HCT116 (cell line): ENCODE measurements at regions of chr11 and their contacts with region 1.

Region 1: DNA sequence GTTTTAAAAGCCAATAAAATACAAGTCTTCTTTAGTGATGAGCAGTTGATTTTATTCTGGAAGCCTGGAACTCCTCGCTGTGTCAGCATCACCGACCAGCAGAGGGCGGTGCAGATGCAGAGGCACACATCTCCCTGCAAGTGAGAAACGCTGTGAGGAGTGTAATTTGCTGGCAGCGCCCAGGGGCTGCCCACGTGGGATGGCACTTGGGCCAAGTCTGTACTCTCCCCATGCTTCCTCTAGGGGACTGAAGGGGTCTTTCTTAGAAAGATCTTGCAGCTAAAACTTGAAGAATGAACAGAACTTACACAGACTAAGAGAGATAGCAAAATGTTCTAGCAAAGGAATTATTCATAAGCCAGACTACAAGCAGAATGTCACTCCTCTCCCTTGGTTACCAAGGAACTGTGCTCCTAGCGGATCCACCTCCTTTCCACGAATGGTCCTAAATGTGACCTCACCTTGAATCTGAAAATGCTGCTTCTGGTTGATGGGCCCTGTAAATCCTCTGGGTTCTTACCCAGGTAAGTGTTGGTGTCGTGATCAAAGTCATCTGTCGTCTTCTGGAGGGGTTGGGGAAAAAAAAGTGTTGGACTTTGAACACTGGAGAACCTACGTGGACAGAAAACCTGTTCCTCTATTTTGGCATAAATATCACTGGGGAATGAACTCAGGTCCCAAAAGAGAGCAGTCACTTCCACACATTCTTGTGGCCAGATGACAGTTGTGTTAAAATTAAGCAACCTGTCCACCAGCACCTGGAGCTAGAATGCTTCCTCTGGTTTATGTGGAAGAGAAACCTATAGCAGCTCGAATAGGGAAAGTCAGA is 31.8 kb downstream of the CNTF start:
- DNase-seq: peak; percentile 68
- ATAC-seq: peak; percentile 97
- H3K4me3 ChIP-seq: no peak overlapping the region
- H3K27ac ChIP-seq: no peak overlapping the region
- H3K4me1 ChIP-seq: peaks cover 11 to 16% of the 10 kb centered on the region in 2 experiments
- H3K27me3 ChIP-seq: no peaks in the 10 kb centered on the region
- CTCF ChIP-seq: peak; percentile 90 to 96 (median 92)
- POLR2A ChIP-seq: no peak
- RAD21 ChIP-seq: peak; percentile 85

Region 2: GRCh38 chr11:58675334-58676155 is 21.3 kb after region 1 on chr11:
- CTCF ChIA-PET with region 1: interaction called, 3 read pairs
- POLR2A ChIA-PET with region 1: no interaction called
- RAD21 ChIA-PET with region 1: no interaction called
- intact Hi-C with region 1: loop called (anchors 1 kb)
- DNase-seq: peak; percentile 51
- ATAC-seq: peak; percentile 99
- H3K4me3 ChIP-seq: no peak overlapping the region
- H3K27ac ChIP-seq: no peak overlapping the region
- H3K4me1 ChIP-seq: no peaks in the 10 kb centered on the region; a peak in 1 of 4 replicates
- H3K27me3 ChIP-seq: no peaks in the 10 kb centered on the region
- CTCF ChIP-seq: peak; percentile 84 to 98 (median 97)
- POLR2A ChIP-seq: no peak
- RAD21 ChIP-seq: peak; percentile 76

Region 3: GRCh38 chr11:58788355-58789023 is 134.2 kb after region 1 on chr11:
- CTCF ChIA-PET with region 1: interaction called, 8 read pairs
- POLR2A ChIA-PET with region 1: no interaction called
- RAD21 ChIA-PET with region 1: no interaction called
- intact Hi-C with region 1: loop called (anchors 1 kb)
- DNase-seq: peak; percentile 34
- ATAC-seq: peak; percentile 98
- H3K4me3 ChIP-seq: no peak overlapping the region
- H3K27ac ChIP-seq: no peak overlapping the region
- H3K4me1 ChIP-seq: peaks cover 0 to 10% of the 10 kb centered on the region in 2 experiments; a peak in 1 of 4 replicates
- H3K27me3 ChIP-seq: no peaks in the 10 kb centered on the region
- CTCF ChIP-seq: peak; percentile 75 to 95 (median 88); a peak in 5 of 6 replicates
- POLR2A ChIP-seq: no peak
- RAD21 ChIP-seq: peak; percentile 91

Region 4: DNA sequence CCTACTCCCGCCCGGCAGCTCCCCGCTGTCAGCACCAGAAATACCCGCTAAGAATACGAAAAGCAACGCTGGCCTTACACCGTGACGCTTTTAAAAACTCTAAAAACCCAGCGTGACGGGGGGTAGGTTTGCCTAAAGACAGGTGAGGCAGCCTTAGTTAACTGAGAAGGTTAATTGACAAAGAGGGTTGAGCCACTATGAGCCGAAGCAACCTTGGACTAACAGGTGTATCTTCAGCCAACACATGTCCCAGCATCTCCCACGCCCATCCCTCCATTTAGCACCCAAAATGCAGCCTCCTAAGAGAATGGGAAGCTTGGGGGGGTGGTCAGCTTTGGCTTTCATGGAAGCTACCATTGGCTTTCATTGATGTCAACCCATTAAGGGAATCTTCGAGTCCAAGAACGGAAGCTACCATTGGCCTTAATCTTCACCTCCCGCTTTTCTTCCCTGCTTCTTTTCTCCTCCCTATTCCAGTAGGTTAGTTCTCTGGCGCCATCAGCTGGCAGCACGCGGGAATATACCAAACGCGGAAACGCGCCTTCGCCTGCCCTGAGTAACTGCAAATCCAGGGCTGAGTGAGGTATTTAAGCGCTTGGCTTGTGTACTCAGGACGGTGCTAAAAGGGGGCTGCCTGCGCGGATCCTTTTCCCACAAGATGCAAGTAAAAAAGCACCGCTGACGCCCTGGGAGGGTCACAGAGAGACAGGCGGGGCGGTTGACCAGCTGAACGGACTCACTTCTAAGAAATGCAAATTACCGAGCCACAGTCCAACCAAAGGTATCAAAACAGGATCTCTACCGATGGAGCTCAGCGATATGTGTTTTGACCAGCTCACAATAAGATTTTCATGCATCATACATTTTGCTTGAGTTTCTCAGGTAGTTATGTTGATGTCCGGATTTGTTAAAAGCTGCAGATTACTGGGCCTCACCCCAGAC is 246.5 kb after region 1 on chr11:
- CTCF ChIA-PET with region 1: interaction called, 4 read pairs
- POLR2A ChIA-PET with region 1: interaction called, 3 read pairs
- RAD21 ChIA-PET with region 1: interaction called in 1 of 2 experiments, 3 read pairs
- intact Hi-C with region 1: loop called (anchors 2 kb)
- DNase-seq: peak; percentile 80
- ATAC-seq: peak; percentile 99
- H3K4me3 ChIP-seq: no peak overlapping the region
- H3K27ac ChIP-seq: no peak overlapping the region
- H3K4me1 ChIP-seq: no peaks in the 10 kb centered on the region
- H3K27me3 ChIP-seq: no peaks in the 10 kb centered on the region
- CTCF ChIP-seq: peak; percentile 71 to 79 (median 78); a peak in 5 of 6 replicates
- POLR2A ChIP-seq: no peak
- RAD21 ChIP-seq: peak; percentile 83

Region 5: GRCh38 chr11:59053387-59053786 is 399.1 kb after region 1 on chr11:
- CTCF ChIA-PET with region 1: interaction called, 6 read pairs
- POLR2A ChIA-PET with region 1: no interaction called
- RAD21 ChIA-PET with region 1: no interaction called
- intact Hi-C with region 1: loop called (anchors 10 kb)
- DNase-seq: peak; percentile 40
- ATAC-seq: peak; percentile 74
- H3K4me3 ChIP-seq: no peak overlapping the region
- H3K27ac ChIP-seq: no peak overlapping the region
- H3K4me1 ChIP-seq: peaks cover 0 to 5% of the 10 kb centered on the region in 2 experiments; a peak in 2 of 4 replicates
- H3K27me3 ChIP-seq: 0 out of 2 replicates have a peak, but pooled peaks cover 4% of the 10 kb centered on the region
- CTCF ChIP-seq: peak; percentile 24 to 76 (median 75); a peak in 5 of 6 replicates
- POLR2A ChIP-seq: no peak
- RAD21 ChIP-seq: peak; percentile 22; the same call in 1 of the 2 replicates